Calu3 (cell line): ENCODE measurements at regions of chr10 and their contacts with region 1.

Region 1: GRCh38 chr10:125707541-125708468 is 11.7 kb upstream of the EDRF1 start:
- DNase-seq: no peak
- H3K4me3 Mint-ChIP-seq: no peak overlapping the region
- H3K27ac Mint-ChIP-seq: no peak overlapping the region
- H3K4me1 Mint-ChIP-seq: peaks cover 8% of the 10 kb centered on the region
- H3K27me3 Mint-ChIP-seq: no peaks in the 10 kb centered on the region
- CTCF ChIP-seq: no peak

Region 2: DNA sequence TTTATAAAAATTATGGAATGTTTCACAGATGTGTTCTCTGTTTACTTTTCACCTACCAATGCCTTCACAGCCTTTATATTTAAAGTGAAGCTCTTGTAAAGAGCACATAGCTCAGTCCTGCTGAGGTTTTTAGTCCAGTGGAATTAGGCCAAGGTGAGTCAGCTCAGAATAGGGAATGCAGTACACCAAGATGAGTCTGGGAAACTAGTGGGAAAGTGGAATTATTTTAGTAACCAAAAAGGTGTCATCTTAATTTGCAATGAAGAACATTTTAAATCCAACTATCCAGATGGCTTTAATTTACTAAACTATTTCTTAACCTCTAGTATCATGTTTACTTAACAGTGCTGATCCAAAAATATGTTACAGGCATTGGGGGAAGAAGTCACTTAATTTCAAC is 311.1 kb before region 1 on chr10:
- CTCF ChIA-PET with region 1: no interaction called
- intact Hi-C with region 1: loop called (anchors 10 kb)
- DNase-seq: no peak
- H3K4me3 Mint-ChIP-seq: no peak overlapping the region
- H3K27ac Mint-ChIP-seq: peak overlapping the region; percentile 54
- H3K4me1 Mint-ChIP-seq: peaks cover 27% of the 10 kb centered on the region
- H3K27me3 Mint-ChIP-seq: no peaks in the 10 kb centered on the region
- CTCF ChIP-seq: no peak

Region 3: GRCh38 chr10:125795128-125795527 is 87.3 kb after region 1 on chr10:
- CTCF ChIA-PET with region 1: no interaction called
- intact Hi-C with region 1: no loop called
- DNase-seq: no peak
- H3K4me3 Mint-ChIP-seq: no peak overlapping the region
- H3K27ac Mint-ChIP-seq: no peak overlapping the region
- H3K4me1 Mint-ChIP-seq: no peaks in the 10 kb centered on the region
- H3K27me3 Mint-ChIP-seq: no peaks in the 10 kb centered on the region
- CTCF ChIP-seq: no peak